ENCODE measurements at regions of chr4 and their contacts with region 1.

Region 1: DNA sequence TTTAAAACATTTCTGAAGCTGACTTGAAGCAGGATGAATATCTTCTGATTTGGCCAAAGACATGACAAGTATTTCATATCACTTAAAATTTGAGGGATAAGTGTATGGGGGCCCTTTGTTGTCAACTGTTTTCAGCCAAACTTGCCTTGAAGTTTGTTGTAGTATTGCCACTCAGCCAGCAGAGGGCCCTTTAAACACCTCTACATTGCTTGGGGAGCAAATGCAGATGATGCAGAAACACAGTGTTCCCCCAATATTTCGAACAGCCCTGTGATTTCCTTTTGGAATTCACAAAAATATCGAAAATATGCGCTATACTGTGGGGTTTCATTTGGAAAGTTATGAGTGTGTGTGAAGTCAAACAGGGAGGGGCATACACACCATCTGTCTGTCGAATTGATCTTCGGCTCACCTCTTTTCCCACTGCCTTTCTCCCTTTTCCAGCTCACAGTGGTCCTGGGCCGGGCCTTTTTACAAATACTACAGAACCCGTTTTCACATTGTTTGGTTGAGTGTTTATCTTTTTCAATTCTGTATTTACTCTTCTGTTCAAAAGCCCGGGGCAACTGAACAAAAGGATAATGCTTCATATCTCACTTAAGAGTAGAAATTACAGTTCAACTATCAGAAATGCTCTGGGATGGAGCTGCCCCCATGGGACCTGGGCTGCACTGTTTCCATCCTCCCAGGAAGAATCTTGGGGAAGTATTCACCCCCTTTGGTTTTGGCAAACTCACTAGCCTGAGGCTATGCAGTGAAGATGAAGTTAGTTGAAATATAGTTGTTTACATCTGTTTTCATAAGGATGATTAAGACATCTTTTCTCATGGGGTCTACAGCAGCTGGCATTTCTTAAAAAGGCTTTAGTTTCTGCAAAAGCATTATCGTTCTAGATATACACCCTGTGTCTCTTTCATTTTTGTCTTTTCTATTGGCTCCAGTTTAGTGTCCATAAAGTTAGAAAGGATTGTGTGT is 137.6 kb downstream of the EGF start:
- DNase-seq: peak; percentile 59
- H3K4me3 Mint-ChIP-seq: no peak overlapping the region
- H3K27ac Mint-ChIP-seq: no peak overlapping the region
- H3K4me1 Mint-ChIP-seq: peaks cover 22% of the 10 kb centered on the region
- H3K27me3 Mint-ChIP-seq: no peaks in the 10 kb centered on the region

Region 2: DNA sequence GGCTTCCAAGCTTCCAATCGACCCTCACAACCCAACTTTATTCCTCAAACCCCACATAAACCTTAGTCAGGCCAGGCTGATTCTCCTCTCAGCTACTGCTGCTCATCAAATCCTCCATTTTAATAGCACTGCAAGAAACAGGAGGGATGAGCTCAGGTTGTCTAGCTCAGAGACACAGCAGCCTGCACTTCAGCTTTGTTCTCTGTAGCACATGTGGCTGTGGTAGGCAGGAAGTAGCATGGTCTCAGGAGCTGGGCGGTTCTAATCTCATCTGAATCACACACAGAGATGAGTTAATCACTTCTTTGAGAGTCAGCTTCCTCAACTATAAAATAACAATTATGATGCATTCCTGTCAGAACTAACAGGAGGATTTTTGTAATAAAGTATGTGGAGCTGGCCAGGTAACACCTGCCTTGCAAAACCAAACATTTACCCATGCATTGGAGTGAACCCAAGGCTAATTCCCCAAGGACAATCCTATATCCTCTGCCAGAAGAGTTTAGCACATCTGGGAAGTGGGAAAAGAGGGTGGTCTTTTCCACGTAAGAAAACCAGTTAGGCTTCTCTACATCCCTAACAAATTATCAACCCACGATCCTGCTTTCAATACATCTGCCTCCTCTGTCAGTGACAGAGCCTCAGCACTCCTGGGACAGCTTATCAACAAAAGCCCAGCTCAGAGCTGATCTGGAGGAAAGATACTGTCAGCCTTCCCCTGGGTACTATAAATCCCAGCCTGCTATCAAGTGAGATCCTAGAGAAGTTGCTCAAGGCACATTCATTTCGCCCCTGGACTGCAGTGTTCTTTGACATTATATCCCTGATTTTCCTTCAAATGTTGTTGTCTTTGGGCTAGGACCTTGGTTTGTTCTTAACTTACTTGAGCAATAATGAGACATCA is 115.4 kb after region 1 on chr4:
- CTCF ChIA-PET with region 1: interaction called, 13 read pairs
- POLR2A ChIA-PET with region 1: interaction called, 13 read pairs
- DNase-seq: peak; percentile 79
- H3K4me3 Mint-ChIP-seq: peak overlapping the region; percentile 50
- H3K27ac Mint-ChIP-seq: peak overlapping the region; percentile 95
- H3K4me1 Mint-ChIP-seq: peaks cover 37% of the 10 kb centered on the region
- H3K27me3 Mint-ChIP-seq: no peaks in the 10 kb centered on the region

Region 3: DNA sequence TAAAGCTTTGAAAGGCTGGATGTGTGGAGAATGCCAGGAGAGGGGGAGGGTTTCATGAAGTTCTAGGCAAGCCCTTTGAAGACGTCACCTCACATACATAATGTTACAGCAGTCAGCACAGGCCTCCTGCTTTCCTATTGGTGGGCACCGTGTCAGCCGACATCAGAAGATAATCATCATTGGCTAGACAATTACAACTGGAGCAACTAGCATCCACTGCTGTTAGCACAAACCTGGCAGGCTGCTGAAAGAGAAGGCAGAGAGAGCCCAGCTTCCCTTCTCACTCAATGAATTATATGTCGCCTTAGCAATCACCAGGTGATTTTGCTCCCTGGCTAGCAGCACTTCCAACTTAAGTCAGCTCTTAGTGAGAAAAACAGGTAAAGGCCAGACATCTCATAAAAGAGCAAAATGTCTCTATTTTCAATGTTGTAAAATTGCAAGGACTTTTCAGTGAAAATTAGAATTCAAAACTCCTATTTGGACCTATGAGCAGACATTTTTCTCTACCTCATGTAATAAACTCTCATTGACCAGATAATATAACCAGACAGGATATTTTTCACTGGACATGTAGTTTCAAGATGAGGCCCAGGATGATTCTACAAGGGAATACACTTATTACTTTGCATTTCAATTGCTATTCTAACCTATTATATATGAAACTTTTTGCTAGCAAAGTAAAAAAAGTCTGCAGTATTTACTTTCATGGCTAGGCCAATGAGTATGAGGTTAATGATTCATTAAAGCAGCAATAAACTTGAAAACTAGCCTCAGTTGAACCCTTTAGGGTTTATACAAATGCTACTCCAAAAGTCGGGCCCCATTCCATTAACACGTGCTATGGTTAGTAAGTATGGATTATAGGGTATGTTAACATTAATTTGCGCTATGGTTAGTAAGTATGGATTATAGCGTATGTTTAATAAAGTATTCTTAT is 143.9 kb after region 1 on chr4:
- CTCF ChIA-PET with region 1: interaction called, 10 read pairs
- POLR2A ChIA-PET with region 1: interaction called, 29 read pairs
- DNase-seq: peak; percentile 84
- H3K4me3 Mint-ChIP-seq: peak overlapping the region; percentile 34
- H3K27ac Mint-ChIP-seq: peak overlapping the region; percentile 72
- H3K4me1 Mint-ChIP-seq: peaks cover 36% of the 10 kb centered on the region
- H3K27me3 Mint-ChIP-seq: peaks cover 2% of the 10 kb centered on the region

Region 4: DNA sequence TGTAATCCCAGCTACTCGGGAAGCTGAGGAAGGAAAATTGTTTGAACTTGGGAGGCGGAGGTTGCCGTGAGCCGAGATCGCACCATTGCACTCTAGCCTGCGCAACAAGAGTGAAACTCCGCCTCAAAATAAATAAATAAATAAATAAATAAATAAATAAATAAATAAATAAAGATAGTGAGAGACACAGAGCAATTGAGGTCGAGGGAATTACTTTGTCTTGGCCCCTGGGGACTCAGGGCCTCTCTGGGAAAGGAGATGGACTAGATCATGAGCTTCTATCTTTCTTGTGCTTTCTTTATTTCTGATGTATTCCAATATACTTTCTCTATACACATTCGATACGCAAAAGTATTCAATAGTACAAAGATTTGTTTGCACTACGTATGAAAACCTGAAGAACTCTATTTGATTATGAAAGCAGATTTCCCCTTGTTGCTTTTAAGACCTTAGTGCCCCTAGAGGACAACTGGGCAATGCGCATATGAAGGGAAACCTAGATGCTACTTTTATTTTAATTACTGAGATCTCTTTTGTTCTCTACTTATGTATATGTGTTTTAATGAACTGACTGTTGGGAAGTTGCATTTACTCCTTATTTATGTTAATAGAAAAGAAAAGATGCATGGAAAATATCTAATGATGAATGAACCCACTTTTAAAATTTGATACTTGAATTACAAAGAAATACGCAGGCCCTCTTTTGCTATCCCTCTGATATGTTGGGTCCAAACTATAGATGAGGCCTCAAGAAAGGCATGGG is 160.9 kb after region 1 on chr4:
- CTCF ChIA-PET with region 1: interaction called, 22 read pairs
- POLR2A ChIA-PET with region 1: no interaction called
- DNase-seq: peak; percentile 22
- H3K4me3 Mint-ChIP-seq: no peak overlapping the region
- H3K27ac Mint-ChIP-seq: no peak overlapping the region
- H3K4me1 Mint-ChIP-seq: peaks cover 1% of the 10 kb centered on the region
- H3K27me3 Mint-ChIP-seq: peaks cover 2% of the 10 kb centered on the region

Region 5: GRCh38 chr4:110510955-110511544 is 460.8 kb after region 1 on chr4:
- CTCF ChIA-PET with region 1: interaction called, 23 read pairs
- POLR2A ChIA-PET with region 1: no interaction called
- DNase-seq: no peak
- H3K4me3 Mint-ChIP-seq: no peak overlapping the region
- H3K27ac Mint-ChIP-seq: no peak overlapping the region
- H3K4me1 Mint-ChIP-seq: peaks cover 10% of the 10 kb centered on the region
- H3K27me3 Mint-ChIP-seq: no peaks in the 10 kb centered on the region